PC-3 (cell line): ENCODE measurements at regions of chr9 and their contacts with region 1.

Region 1: GRCh38 chr9:115883457-115884329 is 269.9 kb upstream of the PAPPA start:
- DNase-seq: peak; percentile 69
- ATAC-seq: peak; percentile 76
- H3K4me3 ChIP-seq: no peak overlapping the region
- H3K27ac ChIP-seq: no peak overlapping the region
- H3K4me1 ChIP-seq: no peaks in the 10 kb centered on the region
- H3K27me3 ChIP-seq: no peaks in the 10 kb centered on the region
- CTCF ChIP-seq: peak; percentile 76

Region 2: GRCh38 chr9:115757461-115757860 is 126.2 kb before region 1 on chr9:
- CTCF ChIA-PET with region 1: no interaction called
- POLR2A ChIA-PET with region 1: no interaction called
- intact Hi-C with region 1: no loop called
- DNase-seq: no peak
- ATAC-seq: no peak
- H3K4me3 ChIP-seq: no peak overlapping the region
- H3K27ac ChIP-seq: no peak overlapping the region
- H3K4me1 ChIP-seq: no peaks in the 10 kb centered on the region
- H3K27me3 ChIP-seq: no peaks in the 10 kb centered on the region
- CTCF ChIP-seq: no peak

Region 3: GRCh38 chr9:116112236-116112635 is 228.5 kb after region 1 on chr9:
- CTCF ChIA-PET with region 1: no interaction called
- POLR2A ChIA-PET with region 1: no interaction called
- intact Hi-C with region 1: loop called (anchors 1 kb)
- DNase-seq: peak; percentile 39
- ATAC-seq: no peak
- H3K4me3 ChIP-seq: no peak overlapping the region
- H3K27ac ChIP-seq: no peak overlapping the region
- H3K4me1 ChIP-seq: no peaks in the 10 kb centered on the region
- H3K27me3 ChIP-seq: no peaks in the 10 kb centered on the region
- CTCF ChIP-seq: peak; percentile 67

Region 4: GRCh38 chr9:116149844-116150243 is 266.2 kb after region 1 on chr9:
- CTCF ChIA-PET with region 1: interaction called, 14 read pairs
- POLR2A ChIA-PET with region 1: no interaction called
- intact Hi-C with region 1: no loop called
- DNase-seq: peak; percentile 42
- ATAC-seq: no peak
- H3K4me3 ChIP-seq: no peak overlapping the region
- H3K27ac ChIP-seq: no peak overlapping the region
- H3K4me1 ChIP-seq: peaks cover 14% of the 10 kb centered on the region
- H3K27me3 ChIP-seq: no peaks in the 10 kb centered on the region
- CTCF ChIP-seq: peak; percentile 66

Region 5: DNA sequence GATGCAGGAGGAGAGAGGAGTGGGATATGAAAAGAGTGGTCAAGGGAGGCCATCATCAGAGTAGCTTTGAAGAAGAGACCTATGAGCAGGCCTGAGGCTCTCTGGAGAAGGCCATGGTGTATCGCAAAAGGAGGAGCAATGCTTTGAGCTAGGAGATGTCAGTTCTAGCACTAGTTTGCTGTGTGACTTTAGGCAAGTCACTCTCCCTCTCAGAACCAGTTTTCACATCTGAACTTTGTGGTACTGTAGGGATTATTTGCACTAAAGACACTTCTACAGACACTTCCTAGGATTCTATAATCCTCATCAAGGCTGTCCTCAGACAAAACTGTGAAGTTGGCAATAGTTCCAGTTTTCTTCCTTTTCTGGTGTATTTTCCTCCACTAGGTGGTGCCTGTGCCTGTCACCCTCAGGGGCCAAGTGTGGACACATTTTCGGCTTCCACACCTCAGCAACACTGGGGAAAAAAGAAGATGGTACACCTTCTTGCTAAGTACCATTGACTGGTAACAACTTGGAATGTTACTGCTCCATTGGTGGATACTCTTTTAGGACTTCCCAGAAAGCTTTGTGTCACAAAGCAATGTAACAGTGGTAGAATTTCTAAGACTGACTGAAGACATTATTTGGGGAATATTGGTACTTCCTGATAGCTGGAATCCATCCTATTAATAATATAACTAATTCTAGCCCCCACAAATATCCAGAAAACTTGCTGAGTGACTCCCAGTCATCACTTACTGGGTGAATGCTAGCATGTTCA is 279.8 kb after region 1 on chr9:
- CTCF ChIA-PET with region 1: no interaction called
- POLR2A ChIA-PET with region 1: no interaction called
- intact Hi-C with region 1: loop called (anchors 5 kb)
- DNase-seq: peak; percentile 49
- ATAC-seq: no peak
- H3K4me3 ChIP-seq: no peak overlapping the region
- H3K27ac ChIP-seq: no peak overlapping the region
- H3K4me1 ChIP-seq: no peaks in the 10 kb centered on the region
- H3K27me3 ChIP-seq: no peaks in the 10 kb centered on the region
- CTCF ChIP-seq: peak; percentile 61

Region 6: GRCh38 chr9:116494815-116495634 is 611.3 kb after region 1 on chr9:
- CTCF ChIA-PET with region 1: no interaction called
- POLR2A ChIA-PET with region 1: no interaction called
- intact Hi-C with region 1: loop called (anchors 10 kb)
- DNase-seq: peak; percentile 46
- ATAC-seq: peak; percentile 28; the same call in 1 of the 2 replicates
- H3K4me3 ChIP-seq: no peak overlapping the region
- H3K27ac ChIP-seq: no peak overlapping the region
- H3K4me1 ChIP-seq: no peaks in the 10 kb centered on the region
- H3K27me3 ChIP-seq: no peaks in the 10 kb centered on the region
- CTCF ChIP-seq: peak; percentile 69

Region 7: GRCh38 chr9:116697362-116697761 is 813.7 kb after region 1 on chr9:
- CTCF ChIA-PET with region 1: interaction called, 11 read pairs
- POLR2A ChIA-PET with region 1: no interaction called
- intact Hi-C with region 1: no loop called
- DNase-seq: no peak
- ATAC-seq: no peak
- H3K4me3 ChIP-seq: no peak overlapping the region
- H3K27ac ChIP-seq: no peak overlapping the region
- H3K4me1 ChIP-seq: peaks cover 27% of the 10 kb centered on the region
- H3K27me3 ChIP-seq: no peaks in the 10 kb centered on the region
- CTCF ChIP-seq: no peak